RWPE1 (cell line): ENCODE measurements at regions of chr12 and their contacts with region 1.

Region 1: DNA sequence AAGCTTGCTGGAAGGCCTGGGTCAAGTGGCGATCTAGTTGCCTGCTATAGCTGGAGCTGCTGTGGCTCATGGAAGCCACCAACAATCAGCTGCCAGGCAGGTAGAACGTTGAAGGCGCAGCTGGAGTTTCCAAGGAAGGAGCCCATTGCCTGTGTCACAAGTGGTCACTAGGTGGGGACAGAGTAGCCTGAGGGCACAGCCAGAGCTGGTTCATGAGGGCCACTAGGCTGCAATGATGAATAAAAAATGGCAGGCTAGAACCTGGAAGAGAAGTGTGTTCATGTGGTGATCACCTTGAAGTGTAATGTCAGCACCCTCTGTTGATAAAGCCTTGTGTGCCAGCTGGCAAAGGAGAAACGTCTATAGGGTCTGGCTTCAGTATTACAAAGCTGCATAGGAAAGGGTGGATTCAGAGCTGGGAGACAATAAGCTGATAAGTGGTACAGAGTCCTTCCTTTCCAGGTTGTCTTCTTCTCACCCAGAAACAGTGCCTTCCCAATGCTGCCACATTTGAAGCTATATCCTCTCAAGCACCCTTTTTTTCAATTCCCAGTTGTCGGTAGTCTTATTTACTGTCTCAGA is 165.8 kb downstream of the EMP1 start:
- DNase-seq: peak; percentile 64
- H3K27ac ChIP-seq: no peak overlapping the region
- CTCF ChIP-seq: peak; percentile 70

Region 2: DNA sequence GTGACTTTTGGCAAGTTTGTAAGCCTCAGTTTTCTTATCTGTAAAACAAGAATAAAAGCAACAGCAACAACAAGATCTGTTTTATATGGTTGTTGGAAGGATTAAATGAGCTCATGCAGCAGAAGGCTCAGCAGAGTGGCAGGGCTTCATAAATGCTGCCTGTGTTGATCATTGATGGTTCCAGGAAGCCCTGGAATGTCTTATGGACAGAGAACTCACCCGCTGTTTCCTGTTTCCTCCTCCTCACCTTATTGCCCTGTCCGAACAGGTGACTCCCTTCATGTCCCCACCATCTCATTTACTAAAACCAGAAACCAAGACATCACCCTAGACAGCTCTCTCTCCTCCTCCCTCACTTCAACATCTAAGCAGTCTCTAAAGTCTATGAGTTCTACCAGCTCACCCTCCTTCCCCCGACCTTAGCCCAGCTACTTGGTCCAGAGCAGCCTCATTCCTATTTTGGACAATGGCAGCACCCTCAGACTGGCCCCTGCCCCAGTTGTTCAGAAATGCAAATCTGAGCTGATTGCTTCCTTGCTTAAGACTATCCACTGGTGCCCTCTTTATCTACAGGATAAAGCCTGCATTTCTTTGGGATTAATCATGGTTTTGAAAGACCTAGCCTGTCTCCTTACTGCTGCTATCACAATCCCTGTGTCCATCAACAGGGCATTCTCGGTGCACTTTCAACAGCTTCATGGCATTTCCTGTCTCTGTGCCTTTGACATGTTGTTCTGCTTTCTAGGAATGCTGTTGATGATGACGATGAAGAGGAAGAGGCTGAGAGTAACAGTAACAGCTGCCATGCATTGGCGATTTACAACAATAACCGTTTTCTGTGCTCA is 237.5 kb before region 1 on chr12:
- CTCF ChIA-PET with region 1: no interaction called
- POLR2A ChIA-PET with region 1: no interaction called
- DNase-seq: peak; percentile 36
- H3K27ac ChIP-seq: no peak overlapping the region
- CTCF ChIP-seq: no peak

Region 3: DNA sequence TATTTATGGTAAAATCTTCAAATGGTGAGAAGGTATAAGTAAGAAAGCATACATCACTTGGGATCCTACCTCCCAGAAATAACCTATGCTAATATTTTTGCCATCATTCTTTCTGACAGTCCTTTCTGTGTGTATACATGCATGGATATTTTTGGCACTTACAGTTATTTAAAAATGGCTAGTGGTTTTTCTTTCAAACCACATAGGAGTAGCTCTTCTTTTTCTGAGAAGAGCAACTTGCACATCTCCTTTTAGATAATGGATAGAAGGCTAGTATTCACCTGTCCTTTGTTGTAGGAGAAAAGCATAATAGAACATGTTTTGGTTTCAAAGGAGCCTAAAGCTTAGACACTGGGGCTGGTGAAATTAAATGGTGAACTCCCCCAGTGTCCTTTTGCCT is 78.5 kb before region 1 on chr12:
- CTCF ChIA-PET with region 1: no interaction called
- POLR2A ChIA-PET with region 1: no interaction called
- DNase-seq: no peak
- H3K27ac ChIP-seq: no peak overlapping the region
- CTCF ChIP-seq: no peak

Region 4: GRCh38 chr12:13348464-13348863 is 13.9 kb before region 1 on chr12:
- CTCF ChIA-PET with region 1: interaction called, 16 read pairs
- POLR2A ChIA-PET with region 1: no interaction called
- DNase-seq: no peak
- H3K27ac ChIP-seq: no peak overlapping the region
- CTCF ChIP-seq: no peak

Region 5: DNA sequence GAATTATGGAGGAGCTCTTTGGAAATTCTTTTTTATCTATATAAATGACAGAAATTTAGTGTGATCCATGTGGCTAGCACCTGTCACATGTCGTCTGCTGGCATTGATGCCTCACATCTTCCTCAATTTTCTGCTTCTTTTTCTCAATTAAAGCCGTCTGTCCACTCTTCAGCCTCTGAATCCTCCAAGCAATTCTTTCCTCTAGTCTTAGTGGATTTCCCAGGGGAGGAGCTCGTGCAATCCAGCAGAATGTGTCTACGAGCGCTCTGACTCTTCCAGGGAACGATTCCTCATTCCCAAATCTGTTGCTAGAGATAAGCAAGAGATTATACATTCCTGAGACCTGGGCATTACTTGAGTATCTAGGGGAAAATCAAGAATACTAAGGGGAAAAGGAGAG is 10.8 kb after region 1 on chr12:
- CTCF ChIA-PET with region 1: interaction called, 13 read pairs
- POLR2A ChIA-PET with region 1: no interaction called
- DNase-seq: no peak
- H3K27ac ChIP-seq: no peak overlapping the region
- CTCF ChIP-seq: no peak